ENCODE measurements at regions of chr3 and their contacts with region 1.

Region 1: DNA sequence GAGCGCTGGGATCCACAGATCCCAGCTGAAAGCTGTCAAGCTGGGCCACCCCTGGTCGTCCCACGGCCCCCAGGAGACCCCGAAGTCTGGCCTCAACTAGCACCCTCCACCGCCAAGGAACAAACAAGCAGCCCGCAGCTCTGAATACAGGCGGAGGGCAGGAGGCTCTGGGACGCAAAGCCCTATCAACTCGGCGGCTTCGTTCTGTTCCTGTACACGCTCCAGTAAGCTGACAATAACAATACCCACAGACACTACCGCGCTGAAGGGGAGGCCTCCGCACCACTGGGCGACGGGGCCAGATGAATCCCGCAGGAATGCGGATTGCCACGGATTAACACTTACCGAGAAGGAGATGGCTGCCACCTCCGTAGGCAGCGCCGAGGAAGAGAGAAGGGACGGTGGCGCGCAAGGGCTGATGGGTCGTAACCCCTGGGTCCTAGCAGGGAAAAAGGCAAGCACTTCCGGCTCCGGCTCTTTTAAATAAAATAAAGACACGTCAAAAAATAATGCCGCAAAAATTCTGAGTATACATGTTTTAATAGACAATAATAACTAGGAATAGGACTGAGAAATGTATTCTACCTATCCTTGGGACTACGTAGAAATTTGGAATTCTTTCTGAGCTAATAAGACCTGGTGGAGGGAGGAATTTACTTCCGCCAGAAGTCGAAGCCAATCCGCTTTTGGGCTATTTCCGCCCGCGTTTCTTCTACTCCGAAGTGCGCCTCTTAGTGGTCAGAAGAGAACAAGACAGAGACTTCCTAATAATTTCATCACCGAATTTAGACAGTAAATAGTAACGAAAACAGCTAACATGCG is at the start of gene RPL32:
- DNase-seq: peak; percentile 72 to 97 (median 84)
- ATAC-seq: peak; percentile 91
- H3K4me3 ChIP-seq: peak within 1 kb of the TSS; percentile 86 to 98
- H3K4me3 Mint-ChIP-seq: peak within 1 kb of the TSS; percentile 98
- H3K27ac ChIP-seq: peak within 1 kb of the TSS; percentile 93 to 95
- H3K27ac Mint-ChIP-seq: peak within 1 kb of the TSS; percentile 99
- H3K4me1 ChIP-seq: peaks cover 29% of the 10 kb centered on the region
- H3K4me1 Mint-ChIP-seq: peaks cover 48% of the 10 kb centered on the region
- H3K27me3 ChIP-seq: no peaks in the 10 kb centered on the region
- H3K27me3 Mint-ChIP-seq: no peaks in the 10 kb centered on the region
- CTCF ChIP-seq: peak; percentile 68
- total RNA-seq, gene RPL32: 4,188 to 4,224 TPM

Region 2: GRCh38 chr3:11846281-11847034 is 994.9 kb before region 1 on chr3 and contains the start of gene TAMM41:
- CTCF ChIA-PET with region 1: no interaction called
- POLR2A ChIA-PET with region 1: no interaction called
- intact Hi-C with region 1: loop called in 1 of 2 experiments (anchors 5 kb)
- DNase-seq: peak; percentile 77 to 94 (median 89)
- ATAC-seq: peak; percentile 99
- H3K4me3 ChIP-seq: peak within 1 kb of the TSS; percentile 91 to 92
- H3K4me3 Mint-ChIP-seq: peak within 1 kb of the TSS; percentile 99
- H3K27ac ChIP-seq: peak within 1 kb of the TSS; percentile 80 to 88
- H3K27ac Mint-ChIP-seq: peak within 1 kb of the TSS; percentile 97
- H3K4me1 ChIP-seq: peaks cover 28% of the 10 kb centered on the region
- H3K4me1 Mint-ChIP-seq: peaks cover 52% of the 10 kb centered on the region
- H3K27me3 ChIP-seq: no peaks in the 10 kb centered on the region
- H3K27me3 Mint-ChIP-seq: no peaks in the 10 kb centered on the region
- CTCF ChIP-seq: peak; percentile 62
- total RNA-seq, gene TAMM41: 16.2 to 18.5 TPM

Region 3: DNA sequence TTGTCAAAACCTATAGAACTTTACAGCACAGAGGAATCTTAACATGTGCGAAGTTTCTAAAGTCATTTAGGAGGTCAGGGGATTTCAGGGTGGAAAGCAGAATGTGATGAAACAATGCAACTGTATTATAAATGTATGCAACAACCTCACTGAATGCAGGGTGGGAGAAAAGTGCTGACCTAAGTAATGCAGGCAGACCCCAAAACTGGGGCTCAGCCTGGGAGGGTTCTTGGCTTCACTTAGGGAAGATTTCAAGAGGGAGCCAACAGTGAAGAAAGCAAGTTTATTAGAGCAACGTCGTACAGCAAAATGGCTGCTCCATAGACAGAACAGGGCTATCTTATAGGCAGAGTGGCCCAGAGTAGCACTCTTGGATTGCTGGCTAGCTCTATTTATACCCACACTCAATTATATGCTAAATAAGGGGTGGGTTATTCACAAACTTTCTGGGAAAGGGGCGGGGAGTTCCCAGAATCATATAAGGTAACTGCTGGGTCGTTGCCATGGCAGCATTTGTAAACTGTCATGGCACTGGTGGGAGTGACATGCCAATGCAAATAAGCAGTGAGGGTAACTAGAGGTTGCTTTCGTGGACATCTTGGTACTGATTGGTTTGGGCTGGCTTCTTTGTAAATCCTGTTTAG is 59.1 kb before region 1 on chr3:
- CTCF ChIA-PET with region 1: interaction called, 21 read pairs
- POLR2A ChIA-PET with region 1: interaction called, 10 read pairs
- intact Hi-C with region 1: loop called in 1 of 2 experiments (anchors 1 kb)
- DNase-seq: peak in 1 of 9 experiments; percentile 24
- ATAC-seq: no peak
- H3K4me3 ChIP-seq: no peak overlapping the region
- H3K4me3 Mint-ChIP-seq: no peak overlapping the region
- H3K27ac ChIP-seq: no peak overlapping the region
- H3K27ac Mint-ChIP-seq: no peak overlapping the region
- H3K4me1 ChIP-seq: no peaks in the 10 kb centered on the region
- H3K4me1 Mint-ChIP-seq: no peaks in the 10 kb centered on the region
- H3K27me3 ChIP-seq: peaks cover 0 to 3% of the 10 kb centered on the region in 2 experiments
- H3K27me3 Mint-ChIP-seq: peaks cover 26% of the 10 kb centered on the region
- CTCF ChIP-seq: no peak

Region 4: GRCh38 chr3:12810013-12810780 is 31.2 kb before region 1 on chr3:
- CTCF ChIA-PET with region 1: interaction called, 32 read pairs
- POLR2A ChIA-PET with region 1: interaction called, 34 read pairs
- intact Hi-C with region 1: loop called (anchors 1 kb)
- DNase-seq: peak; percentile 87 to 98 (median 96)
- ATAC-seq: peak; percentile 99
- H3K4me3 ChIP-seq: peak overlapping the region; percentile 51 to 73
- H3K4me3 Mint-ChIP-seq: peak overlapping the region; percentile 73
- H3K27ac ChIP-seq: no peak overlapping the region
- H3K27ac Mint-ChIP-seq: peak overlapping the region; percentile 64
- H3K4me1 ChIP-seq: peaks cover 8% of the 10 kb centered on the region
- H3K4me1 Mint-ChIP-seq: peaks cover 11% of the 10 kb centered on the region
- H3K27me3 ChIP-seq: no peaks in the 10 kb centered on the region
- H3K27me3 Mint-ChIP-seq: no peaks in the 10 kb centered on the region
- CTCF ChIP-seq: peak; percentile 89

Region 5: GRCh38 chr3:12891985-12892839 is 50.9 kb after region 1 on chr3:
- CTCF ChIA-PET with region 1: interaction called, 17 read pairs
- POLR2A ChIA-PET with region 1: no interaction called
- intact Hi-C with region 1: no loop called
- DNase-seq: peak in 5 of 9 experiments; percentile 46 to 75 (median 64)
- ATAC-seq: peak; percentile 81
- H3K4me3 ChIP-seq: peak overlapping the region in 1 of 2 experiments; percentile 7
- H3K4me3 Mint-ChIP-seq: peak overlapping the region; percentile 56
- H3K27ac ChIP-seq: no peak overlapping the region
- H3K27ac Mint-ChIP-seq: no peak overlapping the region
- H3K4me1 ChIP-seq: peaks cover 7% of the 10 kb centered on the region
- H3K4me1 Mint-ChIP-seq: peaks cover 10% of the 10 kb centered on the region
- H3K27me3 ChIP-seq: no peaks in the 10 kb centered on the region
- H3K27me3 Mint-ChIP-seq: peaks cover 16% of the 10 kb centered on the region
- CTCF ChIP-seq: peak; percentile 93

Region 6: GRCh38 chr3:12954180-12954579 is 112.8 kb after region 1 on chr3:
- CTCF ChIA-PET with region 1: no interaction called
- POLR2A ChIA-PET with region 1: no interaction called
- intact Hi-C with region 1: no loop called
- DNase-seq: no peak
- ATAC-seq: no peak
- H3K4me3 ChIP-seq: no peak overlapping the region
- H3K4me3 Mint-ChIP-seq: no peak overlapping the region
- H3K27ac ChIP-seq: no peak overlapping the region
- H3K27ac Mint-ChIP-seq: no peak overlapping the region
- H3K4me1 ChIP-seq: peaks cover 34% of the 10 kb centered on the region
- H3K4me1 Mint-ChIP-seq: peaks cover 66% of the 10 kb centered on the region
- H3K27me3 ChIP-seq: no peaks in the 10 kb centered on the region
- H3K27me3 Mint-ChIP-seq: no peaks in the 10 kb centered on the region
- CTCF ChIP-seq: no peak

Region 7: GRCh38 chr3:13857702-13858413 is 1016.5 kb after region 1 on chr3:
- CTCF ChIA-PET with region 1: no interaction called
- POLR2A ChIA-PET with region 1: no interaction called
- intact Hi-C with region 1: no loop called
- DNase-seq: no peak
- ATAC-seq: no peak
- H3K4me3 ChIP-seq: no peak overlapping the region
- H3K4me3 Mint-ChIP-seq: no peak overlapping the region
- H3K27ac ChIP-seq: no peak overlapping the region
- H3K27ac Mint-ChIP-seq: no peak overlapping the region
- H3K4me1 ChIP-seq: peaks cover 6% of the 10 kb centered on the region
- H3K4me1 Mint-ChIP-seq: peaks cover 11% of the 10 kb centered on the region
- H3K27me3 ChIP-seq: peaks cover 0 to 2% of the 10 kb centered on the region in 2 experiments
- H3K27me3 Mint-ChIP-seq: peaks cover 7% of the 10 kb centered on the region
- CTCF ChIP-seq: no peak

Measured in CD8-positive, alpha-beta T cell (primary cell).